ENCODE measurements at regions of chr17 and their contacts with region 1.

Region 1: DNA sequence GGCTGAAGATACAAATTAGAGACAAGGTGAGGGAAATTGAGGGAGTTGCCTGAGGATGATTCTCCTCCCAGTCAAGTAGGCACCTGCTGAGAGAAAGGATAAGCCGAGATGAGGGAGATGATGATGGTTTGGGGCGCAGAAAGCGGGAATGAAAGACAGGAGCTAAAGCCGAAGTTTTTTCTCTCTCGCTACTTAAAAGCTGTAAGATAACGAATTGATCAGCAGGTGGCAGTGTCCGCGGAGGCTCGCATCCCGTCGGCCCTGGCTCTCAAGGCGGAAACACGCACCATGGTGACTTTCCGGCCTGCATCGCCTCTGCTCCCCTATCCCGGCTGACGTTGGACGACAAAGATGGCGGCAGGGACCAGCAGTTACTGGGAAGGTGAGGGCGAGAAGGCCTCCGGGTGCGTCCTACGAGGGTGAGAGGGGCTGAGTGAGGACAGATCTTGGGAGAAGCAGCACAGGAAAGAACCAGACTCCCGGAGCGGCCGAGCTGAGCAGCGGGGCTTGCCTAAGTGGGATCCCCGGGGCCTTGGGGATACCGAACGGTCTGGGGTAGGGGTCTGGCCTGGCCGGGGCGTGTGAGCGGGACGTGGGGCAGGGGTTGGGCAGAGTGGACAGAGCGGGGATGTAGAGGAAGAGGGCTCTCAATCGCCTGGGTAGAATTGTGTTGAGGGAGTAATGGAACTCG is at the start of gene GOSR1:
- DNase-seq: peak; percentile 95
- H3K4me3 Mint-ChIP-seq: peak within 1 kb of the TSS; percentile 88
- H3K27ac Mint-ChIP-seq: peak within 1 kb of the TSS; percentile 85
- H3K4me1 Mint-ChIP-seq: peaks cover 39% of the 10 kb centered on the region
- H3K27me3 Mint-ChIP-seq: no peaks in the 10 kb centered on the region
- total RNA-seq, gene GOSR1: 45.5 to 45.7 TPM

Region 2: GRCh38 chr17:30379303-30379902 is 97.8 kb before region 1 on chr17:
- CTCF ChIA-PET with region 1: interaction called, 11 read pairs
- POLR2A ChIA-PET with region 1: no interaction called
- DNase-seq: peak; percentile 46
- H3K4me3 Mint-ChIP-seq: peak overlapping the region; percentile 80
- H3K27ac Mint-ChIP-seq: peak overlapping the region; percentile 40
- H3K4me1 Mint-ChIP-seq: peaks cover 51% of the 10 kb centered on the region
- H3K27me3 Mint-ChIP-seq: peaks cover 13% of the 10 kb centered on the region

Region 3: DNA sequence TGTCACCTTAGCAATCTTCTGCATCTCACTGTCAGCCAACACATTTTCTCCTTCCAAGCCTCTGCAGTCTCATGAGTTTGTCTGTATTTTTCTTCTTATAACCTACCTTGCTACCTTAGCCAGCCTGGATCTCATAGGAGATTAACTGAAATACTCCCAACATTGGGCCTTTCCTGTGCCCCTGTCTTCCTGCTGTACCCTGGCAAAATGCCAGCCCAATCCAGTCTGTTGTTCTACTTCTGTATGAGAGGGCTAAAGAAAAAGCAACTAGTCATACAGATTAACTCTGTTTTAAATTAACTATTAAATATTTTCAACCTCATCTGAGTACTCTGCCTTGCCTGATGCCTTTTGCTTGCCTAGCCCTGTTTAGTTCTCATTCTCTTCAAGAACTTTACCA is 18.4 kb after region 1 on chr17:
- CTCF ChIA-PET with region 1: interaction called, 19 read pairs
- POLR2A ChIA-PET with region 1: interaction called, 6 read pairs
- DNase-seq: no peak
- H3K4me3 Mint-ChIP-seq: no peak overlapping the region
- H3K27ac Mint-ChIP-seq: no peak overlapping the region
- H3K4me1 Mint-ChIP-seq: peaks cover 6% of the 10 kb centered on the region
- H3K27me3 Mint-ChIP-seq: no peaks in the 10 kb centered on the region

Region 4: DNA sequence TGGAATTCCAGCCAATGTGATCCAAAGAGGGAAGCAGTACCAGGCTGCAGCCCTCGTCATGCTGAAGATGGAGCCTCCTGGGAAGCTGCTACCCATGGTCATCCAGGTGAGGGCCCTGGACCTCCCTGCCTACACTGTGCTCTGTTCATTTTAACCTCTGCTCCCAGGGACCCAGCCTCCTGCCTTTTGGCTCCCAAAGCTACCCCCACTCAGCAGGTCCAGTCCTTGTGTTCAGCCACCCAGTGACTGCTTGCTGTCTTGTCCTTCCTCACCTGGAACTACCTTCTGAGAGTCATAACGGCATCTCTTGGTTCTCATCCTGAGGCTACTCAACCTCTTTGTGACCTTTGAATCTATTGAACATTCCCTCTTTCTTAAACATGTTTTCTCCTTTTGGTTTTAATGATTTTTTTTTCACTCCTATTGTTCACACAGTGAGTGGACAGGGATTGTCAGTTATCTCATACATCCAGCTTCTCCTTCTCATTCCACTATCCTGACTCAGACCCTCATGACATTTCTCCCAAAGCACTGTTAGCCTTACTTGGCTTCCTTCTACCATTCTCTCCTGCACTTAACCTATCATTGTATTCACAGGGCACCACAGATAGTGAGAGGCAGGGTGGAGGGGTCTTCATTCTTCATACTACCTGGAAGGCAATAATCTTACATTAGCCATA is 53.3 kb after region 1 on chr17:
- CTCF ChIA-PET with region 1: no interaction called
- POLR2A ChIA-PET with region 1: no interaction called
- DNase-seq: no peak
- H3K4me3 Mint-ChIP-seq: no peak overlapping the region
- H3K27ac Mint-ChIP-seq: no peak overlapping the region
- H3K4me1 Mint-ChIP-seq: no peaks in the 10 kb centered on the region
- H3K27me3 Mint-ChIP-seq: no peaks in the 10 kb centered on the region

Region 5: GRCh38 chr17:30716461-30717300 is 239.5 kb after region 1 on chr17:
- CTCF ChIA-PET with region 1: interaction called, 20 read pairs
- POLR2A ChIA-PET with region 1: no interaction called
- DNase-seq: no peak
- H3K4me3 Mint-ChIP-seq: no peak overlapping the region
- H3K27ac Mint-ChIP-seq: no peak overlapping the region
- H3K4me1 Mint-ChIP-seq: peaks cover 12% of the 10 kb centered on the region
- H3K27me3 Mint-ChIP-seq: peaks cover 2% of the 10 kb centered on the region